Activated B cell treated with CpG ODN at 0.5 μM for 24 hours (primary cell): ENCODE measurements at regions of chr12 and their contacts with region 1.

Region 1: DNA sequence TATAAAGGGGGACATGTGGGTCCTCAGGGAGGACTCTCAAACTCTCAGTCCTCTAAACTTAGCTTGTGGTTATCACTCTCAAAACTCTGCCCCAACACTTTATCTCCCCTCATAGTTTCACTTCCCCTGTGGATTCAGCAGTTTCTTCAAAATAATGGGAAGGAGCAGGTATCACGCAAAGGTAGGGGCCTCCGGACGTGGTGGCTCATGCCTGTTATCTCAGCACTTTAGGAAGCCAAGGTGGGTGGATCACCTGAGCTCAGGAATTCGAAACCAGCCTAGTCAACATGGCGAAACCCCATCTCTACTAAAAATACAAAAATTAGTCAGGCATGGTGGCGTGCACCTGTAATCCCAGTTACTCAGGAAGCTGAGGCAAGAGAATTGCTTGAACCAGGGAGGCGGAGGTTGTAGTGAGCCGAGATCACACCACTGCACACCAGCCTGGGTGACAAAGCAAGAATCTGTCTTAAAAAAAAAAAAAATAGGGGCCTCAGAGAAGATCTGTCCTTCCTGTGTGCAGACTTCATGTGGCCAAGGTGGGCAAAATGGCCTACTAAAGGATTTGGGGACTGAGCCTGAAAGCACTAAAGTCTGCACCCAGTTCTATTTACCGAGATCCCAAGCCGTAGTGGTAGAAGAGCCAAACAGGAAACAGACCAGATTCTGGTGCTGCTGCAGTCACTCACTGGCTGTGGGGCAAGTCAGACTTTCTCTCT is 6.4 kb downstream of the ITGB7 start:
- DNase-seq: no peak
- ATAC-seq: peak; percentile 65
- H3K4me3 Mint-ChIP-seq: peak overlapping the region; percentile 64
- H3K27ac Mint-ChIP-seq: peak overlapping the region; percentile 86
- H3K4me1 Mint-ChIP-seq: peaks cover 81% of the 10 kb centered on the region
- H3K27me3 Mint-ChIP-seq: no peaks in the 10 kb centered on the region
- CTCF ChIP-seq: no peak

Region 2: DNA sequence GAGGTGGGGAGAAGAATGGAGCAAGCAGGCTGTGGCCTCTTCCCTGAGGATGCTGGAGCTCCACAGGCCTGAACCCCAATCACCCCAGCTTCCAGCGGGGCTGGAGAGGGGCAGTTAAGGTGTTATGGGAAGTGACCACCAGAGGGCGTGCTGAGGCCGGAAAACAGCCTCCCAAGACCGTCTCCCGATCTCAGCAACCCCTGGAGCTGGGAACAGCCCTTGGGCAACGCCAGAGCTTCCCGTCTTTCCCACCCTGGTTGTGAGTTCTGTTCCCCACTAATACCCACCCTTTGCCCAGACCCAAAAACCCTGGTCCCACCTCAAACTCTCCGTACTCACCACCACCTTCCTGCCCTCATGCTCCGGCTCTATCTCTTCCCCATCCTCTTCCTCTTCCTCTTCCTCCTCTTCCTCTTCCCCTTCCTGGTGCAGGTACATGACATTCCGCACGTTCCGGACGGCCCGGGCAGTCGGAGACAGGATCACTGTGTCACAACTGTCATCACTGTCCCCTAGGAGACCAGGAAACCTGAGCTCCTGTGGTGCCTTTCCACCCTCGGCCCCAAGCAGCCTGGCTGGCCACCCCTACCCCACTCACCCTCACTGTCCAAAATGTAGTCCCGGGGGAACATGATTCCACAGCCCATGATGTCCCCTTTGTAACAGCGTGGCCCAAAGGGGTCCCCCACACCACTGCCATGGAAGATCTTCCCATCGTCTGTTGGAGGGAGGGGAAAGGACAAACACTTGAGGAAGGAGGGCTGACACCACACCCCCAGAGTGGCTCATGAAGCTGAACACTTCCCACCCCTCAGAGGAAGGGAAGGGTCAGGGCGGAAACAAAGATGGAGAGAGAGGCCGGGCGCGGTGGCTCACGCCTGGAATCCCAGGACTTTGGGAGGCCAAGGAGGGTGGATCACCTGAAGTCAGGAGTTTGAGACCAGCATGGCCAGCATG is 134.4 kb before region 1 on chr12:
- CTCF ChIA-PET with region 1: interaction called, 20 read pairs
- POLR2A ChIA-PET with region 1: no interaction called
- intact Hi-C with region 1: no loop called
- DNase-seq: peak; percentile 55
- ATAC-seq: peak; percentile 63
- H3K4me3 Mint-ChIP-seq: no peak overlapping the region
- H3K27ac Mint-ChIP-seq: no peak overlapping the region
- H3K4me1 Mint-ChIP-seq: peaks cover 10% of the 10 kb centered on the region
- H3K27me3 Mint-ChIP-seq: no peaks in the 10 kb centered on the region
- CTCF ChIP-seq: no peak

Region 3: DNA sequence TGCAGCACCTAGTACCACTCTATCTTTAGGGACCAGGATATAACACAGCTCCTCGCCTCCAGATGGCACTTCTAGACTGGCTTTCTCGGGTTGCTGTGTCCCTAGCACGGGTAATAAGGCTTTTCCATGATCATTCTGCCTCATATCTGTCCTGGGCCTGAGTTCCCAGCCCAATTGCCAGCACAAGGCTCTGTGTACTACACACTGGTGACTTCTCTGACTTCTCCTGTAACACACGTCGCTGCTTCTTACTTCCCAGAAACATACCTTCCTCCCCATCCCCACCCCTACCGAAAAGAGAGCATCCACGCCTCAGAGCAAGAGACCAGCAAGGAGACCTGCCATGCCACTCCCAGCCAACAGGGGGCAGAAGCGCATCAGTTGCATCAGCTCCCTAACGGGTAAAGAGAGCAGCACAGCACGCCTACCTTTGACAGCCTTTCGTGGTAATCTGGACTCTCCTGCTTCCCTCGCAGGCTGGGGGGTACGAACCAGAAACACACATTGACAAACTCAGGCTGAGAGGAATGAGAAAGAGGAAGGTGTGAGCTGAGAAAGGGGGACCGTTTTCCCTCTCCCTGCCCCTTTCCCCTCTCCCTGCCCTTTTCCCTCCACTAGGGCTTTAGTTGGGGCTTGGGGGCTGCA is 41.3 kb before region 1 on chr12:
- CTCF ChIA-PET with region 1: interaction called, 65 read pairs
- POLR2A ChIA-PET with region 1: interaction called, 6 read pairs
- intact Hi-C with region 1: loop called (anchors 1 kb)
- DNase-seq: peak; percentile 78
- ATAC-seq: peak; percentile 100
- H3K4me3 Mint-ChIP-seq: no peak overlapping the region
- H3K27ac Mint-ChIP-seq: no peak overlapping the region
- H3K4me1 Mint-ChIP-seq: peaks cover 5% of the 10 kb centered on the region
- H3K27me3 Mint-ChIP-seq: no peaks in the 10 kb centered on the region
- CTCF ChIP-seq: peak; percentile 13

Region 4: GRCh38 chr12:53190108-53190729 is 10.4 kb before region 1 on chr12:
- CTCF ChIA-PET with region 1: interaction called, 7 read pairs
- POLR2A ChIA-PET with region 1: interaction called, 48 read pairs
- intact Hi-C with region 1: no loop called
- DNase-seq: no peak
- ATAC-seq: peak; percentile 89
- H3K4me3 Mint-ChIP-seq: no peak overlapping the region
- H3K27ac Mint-ChIP-seq: peak overlapping the region; percentile 31
- H3K4me1 Mint-ChIP-seq: peaks cover 8% of the 10 kb centered on the region
- H3K27me3 Mint-ChIP-seq: no peaks in the 10 kb centered on the region
- CTCF ChIP-seq: no peak

Region 5: DNA sequence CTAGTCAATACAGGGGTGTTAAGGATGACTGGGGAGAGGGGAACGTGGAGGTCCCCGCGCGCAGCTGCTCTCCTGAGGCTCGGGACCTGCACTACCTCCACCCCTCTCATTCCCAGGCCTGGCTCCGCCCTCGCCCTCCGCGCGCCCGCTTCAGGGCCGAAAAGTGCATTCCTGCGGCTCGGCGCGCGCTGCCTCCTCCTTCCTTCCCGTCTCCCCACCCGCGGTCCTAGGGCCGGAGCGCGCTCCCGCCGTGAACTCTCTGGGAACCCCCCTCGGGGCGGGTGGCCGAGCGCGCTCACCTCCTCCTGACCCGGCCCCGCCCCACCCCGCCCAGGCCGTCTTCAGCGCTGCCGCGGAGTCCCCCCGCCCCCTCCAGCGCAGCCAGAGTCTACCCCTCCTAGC is 20.2 kb after region 1 on chr12:
- CTCF ChIA-PET with region 1: no interaction called
- POLR2A ChIA-PET with region 1: interaction called, 36 read pairs
- intact Hi-C with region 1: no loop called
- DNase-seq: peak; percentile 74
- ATAC-seq: peak; percentile 77
- H3K4me3 Mint-ChIP-seq: peak overlapping the region; percentile 89
- H3K27ac Mint-ChIP-seq: peak overlapping the region; percentile 96
- H3K4me1 Mint-ChIP-seq: peaks cover 48% of the 10 kb centered on the region
- H3K27me3 Mint-ChIP-seq: no peaks in the 10 kb centered on the region
- CTCF ChIP-seq: no peak